Activated B cell treated with CpG ODN at 0.5 μM for 24 hours (primary cell): ENCODE measurements at regions of chr4 and their contacts with region 1.

Region 1: GRCh38 chr4:13611283-13611842 is 16.2 kb downstream of the BOD1L1 start:
- DNase-seq: no peak
- ATAC-seq: peak; percentile 90
- H3K4me3 Mint-ChIP-seq: peak overlapping the region; percentile 62
- H3K27ac Mint-ChIP-seq: peak overlapping the region; percentile 88
- H3K4me1 Mint-ChIP-seq: peaks cover 57% of the 10 kb centered on the region
- H3K27me3 Mint-ChIP-seq: no peaks in the 10 kb centered on the region
- CTCF ChIP-seq: no peak

Region 2: GRCh38 chr4:13386405-13387107 is 224.8 kb before region 1 on chr4:
- CTCF ChIA-PET with region 1: no interaction called
- POLR2A ChIA-PET with region 1: no interaction called
- intact Hi-C with region 1: loop called (anchors 5 kb)
- DNase-seq: no peak
- ATAC-seq: peak; percentile 61
- H3K4me3 Mint-ChIP-seq: peak overlapping the region; percentile 12
- H3K27ac Mint-ChIP-seq: no peak overlapping the region
- H3K4me1 Mint-ChIP-seq: peaks cover 39% of the 10 kb centered on the region
- H3K27me3 Mint-ChIP-seq: no peaks in the 10 kb centered on the region
- CTCF ChIP-seq: no peak

Region 3: DNA sequence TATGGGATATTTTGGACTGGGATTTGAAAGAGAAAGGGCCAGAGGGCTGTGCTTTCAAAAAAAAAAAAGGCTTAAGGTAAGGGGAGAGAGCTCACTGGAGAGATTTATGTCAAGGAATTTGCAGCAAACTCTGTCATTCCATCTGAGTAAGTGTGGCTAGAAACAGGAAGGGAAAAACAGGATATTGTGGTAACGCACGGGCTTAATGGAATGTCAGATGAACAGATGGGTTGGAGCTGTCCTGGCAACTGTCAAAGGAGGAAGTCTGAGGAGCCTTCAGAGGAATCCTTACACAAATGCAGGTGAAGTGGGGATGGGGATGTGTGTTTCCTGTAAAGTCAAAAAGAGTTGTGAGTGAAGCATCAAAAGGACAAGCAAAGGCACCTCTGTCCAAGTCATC is 52.0 kb before region 1 on chr4:
- CTCF ChIA-PET with region 1: no interaction called
- POLR2A ChIA-PET with region 1: no interaction called
- intact Hi-C with region 1: no loop called
- DNase-seq: no peak
- ATAC-seq: no peak
- H3K4me3 Mint-ChIP-seq: no peak overlapping the region
- H3K27ac Mint-ChIP-seq: no peak overlapping the region
- H3K4me1 Mint-ChIP-seq: no peaks in the 10 kb centered on the region
- H3K27me3 Mint-ChIP-seq: peaks cover 4% of the 10 kb centered on the region
- CTCF ChIP-seq: no peak

Region 4: DNA sequence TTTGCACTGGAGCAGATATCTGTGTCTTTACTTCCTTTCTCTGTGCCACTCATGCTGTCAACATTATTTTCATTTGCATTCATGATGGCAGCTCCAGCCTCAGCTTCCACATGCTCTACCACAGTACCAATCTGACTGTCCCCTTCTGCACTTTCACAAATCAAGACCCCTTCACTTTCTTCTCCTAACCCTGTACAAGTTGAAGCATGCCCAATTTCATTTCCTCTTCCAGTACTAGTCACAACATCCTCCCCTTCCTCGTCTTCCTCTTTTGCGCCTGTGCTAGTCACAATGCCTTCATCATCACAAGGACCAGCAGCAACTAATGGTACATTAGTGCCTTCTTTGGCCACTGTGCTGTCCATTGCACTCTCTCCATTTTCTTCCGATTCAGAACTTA is 10.3 kb before region 1 on chr4:
- CTCF ChIA-PET with region 1: no interaction called
- POLR2A ChIA-PET with region 1: interaction called, 7 read pairs
- intact Hi-C with region 1: loop called (anchors 1 kb)
- DNase-seq: no peak
- ATAC-seq: peak; percentile 96
- H3K4me3 Mint-ChIP-seq: peak overlapping the region; percentile 48
- H3K27ac Mint-ChIP-seq: peak overlapping the region; percentile 76
- H3K4me1 Mint-ChIP-seq: peaks cover 34% of the 10 kb centered on the region
- H3K27me3 Mint-ChIP-seq: no peaks in the 10 kb centered on the region
- CTCF ChIP-seq: no peak